Activated naive CD4-positive, alpha-beta T cell treated with anti-CD3 and anti-CD28 coated beads for 36 hours (primary cell): ENCODE measurements at regions of chr4 and their contacts with region 1.

Region 1: GRCh38 chr4:145898926-145899531 is 39.6 kb downstream of the ZNF827 start:
- DNase-seq: no peak
- H3K4me3 Mint-ChIP-seq: no peak overlapping the region
- H3K27ac Mint-ChIP-seq: no peak overlapping the region
- H3K4me1 Mint-ChIP-seq: peaks cover 35% of the 10 kb centered on the region
- H3K27me3 Mint-ChIP-seq: no peaks in the 10 kb centered on the region

Region 2: DNA sequence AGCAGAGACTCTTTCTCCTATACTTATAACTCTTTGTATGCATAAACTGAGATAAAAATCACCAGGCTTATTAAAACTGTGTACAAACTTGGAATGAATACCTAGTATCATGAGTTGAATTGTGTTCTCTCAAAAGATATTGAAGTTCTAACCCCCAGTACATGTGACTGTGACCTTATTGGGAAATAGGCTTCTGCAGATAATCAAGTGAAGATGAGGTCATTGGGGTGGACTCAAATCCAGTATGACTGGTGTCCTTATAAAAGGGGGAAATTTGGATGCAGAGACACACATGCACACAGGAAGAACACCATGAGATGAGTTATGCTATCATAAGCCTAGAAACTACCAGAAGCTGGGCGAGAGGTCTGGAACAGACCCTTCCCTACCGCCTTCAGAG is 13.3 kb after region 1 on chr4:
- CTCF ChIA-PET with region 1: no interaction called
- intact Hi-C with region 1: loop called (anchors 2 kb)
- DNase-seq: no peak
- H3K4me3 Mint-ChIP-seq: no peak overlapping the region
- H3K27ac Mint-ChIP-seq: no peak overlapping the region
- H3K4me1 Mint-ChIP-seq: peaks cover 22% of the 10 kb centered on the region
- H3K27me3 Mint-ChIP-seq: no peaks in the 10 kb centered on the region